ENCODE measurements at regions of chr5 and their contacts with region 1.

Region 1: DNA sequence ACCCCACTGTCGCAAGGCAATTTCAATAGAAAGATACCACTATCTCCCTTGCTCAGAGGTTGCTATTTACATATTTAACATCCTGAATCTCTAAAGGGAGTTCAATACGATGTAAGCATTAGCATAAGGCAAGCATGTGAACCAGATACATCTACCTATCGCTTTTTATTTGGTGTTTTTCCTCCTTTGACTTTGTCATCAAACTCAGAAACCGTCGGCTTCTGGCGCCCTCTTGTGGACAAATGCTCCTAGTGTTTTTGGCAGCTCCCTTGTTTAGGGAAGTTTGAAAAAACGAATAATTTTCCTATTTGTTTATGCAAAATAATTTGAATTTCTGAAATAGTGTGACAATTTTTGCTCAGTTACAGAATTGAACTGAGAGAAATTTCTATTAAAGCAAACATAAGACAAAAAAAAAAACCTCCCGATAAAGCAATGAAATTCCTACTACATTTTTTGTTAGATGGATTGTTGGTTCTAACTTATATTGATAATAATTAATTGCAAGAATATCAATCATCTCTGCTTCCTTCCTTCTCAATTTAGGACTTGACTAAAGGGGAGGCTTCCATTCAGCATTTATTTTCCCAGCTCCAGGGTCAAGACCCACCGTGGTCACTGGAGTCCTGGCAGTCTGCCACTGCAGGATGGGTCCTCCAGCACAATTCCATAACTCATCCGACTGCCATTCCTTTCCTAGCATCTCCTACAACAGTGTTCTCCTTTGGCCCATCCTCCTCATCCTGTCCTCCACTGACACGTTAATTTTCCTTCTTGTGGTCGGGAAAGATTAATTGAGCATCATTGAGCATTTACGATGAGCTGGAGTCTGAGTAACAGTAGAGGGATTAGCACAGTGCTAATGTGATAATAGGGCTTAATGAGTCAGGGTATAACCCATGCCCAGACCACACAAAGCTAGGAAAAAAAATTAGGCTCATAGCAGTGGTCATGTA is 131.8 kb upstream of the CHD1 start:
- DNase-seq: peak; percentile 91
- ATAC-seq: peak; percentile 45
- H3K4me3 Mint-ChIP-seq: no peak overlapping the region
- H3K27ac Mint-ChIP-seq: no peak overlapping the region
- H3K4me1 Mint-ChIP-seq: peaks cover 4% of the 10 kb centered on the region
- H3K27me3 Mint-ChIP-seq: peaks cover 2% of the 10 kb centered on the region
- CTCF ChIP-seq: peak; percentile 98

Region 2: GRCh38 chr5:98816582-98817222 is 243.9 kb before region 1 on chr5:
- CTCF ChIA-PET with region 1: no interaction called
- POLR2A ChIA-PET with region 1: no interaction called
- intact Hi-C with region 1: no loop called
- DNase-seq: no peak
- ATAC-seq: no peak
- H3K4me3 Mint-ChIP-seq: no peak overlapping the region
- H3K27ac Mint-ChIP-seq: no peak overlapping the region
- H3K4me1 Mint-ChIP-seq: peaks cover 2% of the 10 kb centered on the region
- H3K27me3 Mint-ChIP-seq: peaks cover 3% of the 10 kb centered on the region
- CTCF ChIP-seq: no peak

Region 3: DNA sequence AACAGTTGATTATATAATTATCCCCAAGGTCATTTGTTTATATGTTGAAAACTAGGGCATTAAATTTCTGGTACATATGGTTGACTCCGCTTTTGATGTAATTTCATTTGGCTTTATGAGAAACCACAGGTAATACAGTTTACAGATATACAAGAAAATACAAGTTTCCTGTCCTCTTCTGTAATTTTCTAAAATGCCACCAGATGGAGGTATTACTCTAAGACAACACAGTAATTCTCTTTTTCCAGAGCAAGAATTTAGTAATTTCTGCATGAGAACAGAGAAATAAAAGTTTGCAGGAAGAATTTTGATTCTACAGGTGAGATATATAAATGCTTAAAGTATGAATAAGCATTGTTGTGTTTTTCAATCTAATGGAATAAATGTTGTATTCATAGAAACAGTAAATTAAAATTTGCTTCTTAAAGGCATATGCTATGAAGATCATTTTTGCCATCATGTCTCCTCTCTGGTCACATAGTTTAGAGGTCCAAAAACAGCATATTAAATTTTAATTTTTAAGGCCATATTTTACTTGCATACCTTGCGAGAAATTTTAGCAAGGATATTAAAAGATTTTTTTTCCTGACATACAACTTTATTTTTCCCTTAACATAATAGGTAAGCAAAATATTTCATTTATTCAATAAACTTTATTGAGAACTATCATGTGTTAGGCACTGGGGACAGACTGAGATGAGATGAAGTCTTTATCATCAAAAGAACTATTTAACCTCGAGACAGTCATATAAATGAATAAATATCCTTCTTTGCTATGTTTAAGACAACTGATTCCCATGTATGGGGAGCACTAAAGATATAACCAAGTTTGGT is 154.5 kb before region 1 on chr5:
- CTCF ChIA-PET with region 1: interaction called, 44 read pairs
- POLR2A ChIA-PET with region 1: no interaction called
- intact Hi-C with region 1: loop called (anchors 1 kb)
- DNase-seq: no peak
- ATAC-seq: peak; percentile 71
- H3K4me3 Mint-ChIP-seq: no peak overlapping the region
- H3K27ac Mint-ChIP-seq: no peak overlapping the region
- H3K4me1 Mint-ChIP-seq: peaks cover 55% of the 10 kb centered on the region
- H3K27me3 Mint-ChIP-seq: no peaks in the 10 kb centered on the region
- CTCF ChIP-seq: peak; percentile 86

Region 4: GRCh38 chr5:98938464-98938863 is 122.1 kb before region 1 on chr5:
- CTCF ChIA-PET with region 1: interaction called, 14 read pairs
- POLR2A ChIA-PET with region 1: no interaction called
- intact Hi-C with region 1: no loop called
- DNase-seq: no peak
- ATAC-seq: no peak
- H3K4me3 Mint-ChIP-seq: no peak overlapping the region
- H3K27ac Mint-ChIP-seq: peak overlapping the region; percentile 37
- H3K4me1 Mint-ChIP-seq: peaks cover 63% of the 10 kb centered on the region
- H3K27me3 Mint-ChIP-seq: no peaks in the 10 kb centered on the region
- CTCF ChIP-seq: no peak

Region 5: GRCh38 chr5:99045871-99046270 is 14.7 kb before region 1 on chr5:
- CTCF ChIA-PET with region 1: interaction called, 10 read pairs
- POLR2A ChIA-PET with region 1: no interaction called
- intact Hi-C with region 1: no loop called
- DNase-seq: no peak
- ATAC-seq: no peak
- H3K4me3 Mint-ChIP-seq: no peak overlapping the region
- H3K27ac Mint-ChIP-seq: no peak overlapping the region
- H3K4me1 Mint-ChIP-seq: no peaks in the 10 kb centered on the region
- H3K27me3 Mint-ChIP-seq: no peaks in the 10 kb centered on the region
- CTCF ChIP-seq: no peak